Testis (tissue), 5 donors: ENCODE measurements at regions of chr12 and their contacts with region 1.

Region 1: DNA sequence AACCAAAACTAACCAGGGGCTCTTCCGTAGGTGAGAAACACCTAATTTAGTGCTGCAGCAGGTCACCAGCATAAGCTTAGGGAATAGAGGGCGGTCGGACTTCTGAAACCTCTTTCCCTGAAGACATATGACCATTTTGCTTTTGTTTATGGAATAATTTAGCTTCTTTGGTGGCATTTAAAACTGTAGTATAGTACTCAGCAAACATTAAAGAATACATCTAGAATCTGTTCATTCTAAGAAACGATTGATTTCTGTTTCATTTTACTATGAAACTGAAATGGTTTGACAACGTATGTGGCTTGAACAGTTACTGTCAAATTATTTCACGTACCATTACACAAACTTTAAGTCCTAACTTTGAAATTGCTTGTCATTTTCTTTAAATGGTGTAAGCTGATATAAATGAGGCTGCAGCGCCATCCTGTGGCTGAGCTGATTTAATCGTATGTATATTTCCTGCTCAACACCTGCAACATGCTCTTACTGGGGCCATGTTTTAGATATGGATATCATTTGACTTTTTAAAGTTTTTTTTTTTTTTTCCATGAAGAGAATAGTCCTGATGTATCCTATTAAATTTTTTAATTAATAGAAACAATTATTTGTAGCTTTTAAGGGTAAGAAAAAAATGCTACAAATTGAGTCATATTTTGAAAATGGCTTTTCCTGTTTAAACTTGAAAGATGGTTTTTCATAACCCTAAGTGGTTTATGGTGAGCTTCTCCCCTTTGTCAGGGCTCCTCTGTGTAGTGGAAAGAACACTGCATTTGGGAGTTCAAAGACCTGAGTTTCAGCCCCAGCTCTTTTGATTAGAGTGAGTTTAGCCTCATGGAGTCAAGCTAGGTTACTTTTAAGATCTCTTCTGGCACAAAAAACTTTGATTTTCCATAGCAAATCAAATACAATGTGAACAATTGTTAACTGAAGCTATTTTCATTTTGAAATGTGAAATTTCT is 27.4 kb downstream of the CFAP54 start:
- DNase-seq: peak; percentile 89
- H3K4me3 ChIP-seq: no peak overlapping the region
- H3K27ac ChIP-seq: no peak overlapping the region
- H3K4me1 ChIP-seq: no peaks in the 10 kb centered on the region
- H3K27me3 ChIP-seq: no peaks in the 10 kb centered on the region
- CTCF ChIP-seq: peak; percentile 66 to 78 (median 67)
- POLR2A ChIP-seq: no peak

Region 2: DNA sequence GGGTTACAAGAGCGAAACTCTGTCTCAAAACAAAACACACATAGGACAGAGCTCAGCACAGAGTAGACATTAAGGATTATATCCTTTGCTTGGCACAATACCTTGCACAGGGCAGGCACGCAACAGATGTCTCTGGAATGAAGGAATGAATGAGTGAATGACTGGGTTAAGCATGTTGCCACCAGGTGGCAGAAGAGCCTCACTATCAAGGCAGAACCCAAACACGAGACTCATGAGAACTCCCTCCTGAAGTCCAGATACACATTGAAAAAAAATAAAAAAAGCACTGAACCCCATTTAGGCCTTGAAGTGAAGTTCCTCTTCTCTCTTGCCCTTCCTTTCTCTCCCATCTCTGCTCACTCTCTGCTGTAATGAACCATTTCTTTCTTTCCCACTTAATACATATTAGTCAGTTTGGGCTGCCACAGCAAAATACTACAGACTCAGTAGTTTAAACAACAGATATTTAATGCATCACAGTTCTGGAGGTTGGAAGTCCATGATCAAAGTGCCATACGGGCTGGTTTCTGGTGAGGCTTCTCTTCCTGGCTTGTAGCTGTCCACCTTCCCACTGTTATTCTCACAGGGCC is 454.8 kb before region 1 on chr12:
- intact Hi-C with region 1: loop called (anchors 10 kb)
- DNase-seq: peak; percentile 83
- H3K4me3 ChIP-seq: no peak overlapping the region
- H3K27ac ChIP-seq: no peak overlapping the region
- H3K4me1 ChIP-seq: no peaks in the 10 kb centered on the region
- H3K27me3 ChIP-seq: no peaks in the 10 kb centered on the region
- CTCF ChIP-seq: peak; percentile 75 to 79 (median 75)
- POLR2A ChIP-seq: no peak

Region 3: DNA sequence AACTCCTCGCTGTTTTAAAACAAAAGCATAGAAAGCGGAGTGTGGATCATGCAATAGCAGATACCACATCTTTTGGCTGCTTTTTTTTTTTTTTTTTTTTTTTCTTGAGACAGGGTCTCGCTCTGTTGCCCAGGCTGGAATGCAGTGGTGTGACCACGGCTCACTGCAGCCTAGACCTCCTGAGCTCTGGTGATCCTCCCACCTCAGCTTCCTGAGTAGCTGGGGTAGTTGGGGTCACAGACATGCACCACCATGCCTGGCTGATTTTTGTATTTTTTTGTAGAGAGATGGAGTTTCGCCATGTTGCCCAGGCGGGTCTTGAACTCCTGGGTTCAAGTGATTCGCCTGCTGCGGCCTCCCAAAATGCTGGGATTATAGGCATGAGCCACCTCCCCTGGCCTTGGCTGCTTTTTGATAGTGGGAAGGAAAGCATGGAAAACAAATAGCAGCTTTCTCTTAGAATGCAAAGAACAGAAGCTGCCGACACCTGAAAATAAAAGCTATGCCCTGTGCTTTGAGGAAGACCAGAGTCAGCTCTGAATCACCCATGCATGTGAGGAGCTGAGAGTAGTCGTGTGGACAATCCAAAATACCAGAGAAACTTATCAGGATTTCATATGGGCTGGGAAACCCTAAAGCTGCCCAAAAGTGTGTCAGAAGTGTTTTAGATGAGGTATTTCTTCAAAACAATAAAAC is 326.2 kb before region 1 on chr12:
- intact Hi-C with region 1: no loop called
- DNase-seq: no peak
- H3K4me3 ChIP-seq: no peak overlapping the region
- H3K27ac ChIP-seq: no peak overlapping the region
- H3K4me1 ChIP-seq: no peaks in the 10 kb centered on the region
- H3K27me3 ChIP-seq: no peaks in the 10 kb centered on the region
- CTCF ChIP-seq: no peak
- POLR2A ChIP-seq: no peak